ENCODE measurements at regions of chr2 and their contacts with region 1.

Region 1: GRCh38 chr2:53933329-53933728 is 37.5 kb downstream of the PSME4 start:
- DNase-seq: no peak
- ATAC-seq: no peak

Region 2: GRCh38 chr2:53886406-53887280 is 46.7 kb before region 1 on chr2:
- intact Hi-C with region 1: loop called (anchors 5 kb)
- DNase-seq: no peak
- ATAC-seq: no peak

Region 3: GRCh38 chr2:53903011-53903410 is 30.3 kb before region 1 on chr2:
- intact Hi-C with region 1: no loop called
- DNase-seq: no peak
- ATAC-seq: no peak

Measured in Right ventricle myocardium inferior (tissue), 1 donor.